ENCODE measurements at regions of chr3 and their contacts with region 1.

Region 1: GRCh38 chr3:38117748-38118420 is 19.0 kb downstream of the ACAA1 start:
- DNase-seq: peak; percentile 66 to 74 (median 70)
- H3K4me3 ChIP-seq: no peak overlapping the region
- H3K4me3 Mint-ChIP-seq: no peak overlapping the region
- H3K27ac ChIP-seq: no peak overlapping the region
- H3K27ac Mint-ChIP-seq: peak overlapping the region in 4 of 7 donors; percentile 25 to 86 (median 77)
- H3K4me1 ChIP-seq: no peaks in the 10 kb centered on the region
- H3K4me1 Mint-ChIP-seq: peaks cover 2 to 15% (median 6%) of the 10 kb centered on the region in 4 donors
- H3K27me3 ChIP-seq: no peaks in the 10 kb centered on the region
- H3K27me3 Mint-ChIP-seq: no peaks in the 10 kb centered on the region

Region 2: GRCh38 chr3:38131621-38132369 is 13.9 kb after region 1 on chr3:
- CTCF ChIA-PET with region 1: interaction called, 12 read pairs
- POLR2A ChIA-PET with region 1: interaction called, 12 read pairs
- intact Hi-C with region 1: no loop called
- DNase-seq: peak in 1 of 5 donors; percentile 12
- H3K4me3 ChIP-seq: no peak overlapping the region
- H3K4me3 Mint-ChIP-seq: no peak overlapping the region
- H3K27ac ChIP-seq: no peak overlapping the region
- H3K27ac Mint-ChIP-seq: peak overlapping the region; percentile 19 to 80 (median 48)
- H3K4me1 ChIP-seq: peaks cover 48% of the 10 kb centered on the region
- H3K4me1 Mint-ChIP-seq: peaks cover 26 to 55% (median 34%) of the 10 kb centered on the region in 4 donors
- H3K27me3 ChIP-seq: no peaks in the 10 kb centered on the region
- H3K27me3 Mint-ChIP-seq: no peaks in the 10 kb centered on the region

Region 3: DNA sequence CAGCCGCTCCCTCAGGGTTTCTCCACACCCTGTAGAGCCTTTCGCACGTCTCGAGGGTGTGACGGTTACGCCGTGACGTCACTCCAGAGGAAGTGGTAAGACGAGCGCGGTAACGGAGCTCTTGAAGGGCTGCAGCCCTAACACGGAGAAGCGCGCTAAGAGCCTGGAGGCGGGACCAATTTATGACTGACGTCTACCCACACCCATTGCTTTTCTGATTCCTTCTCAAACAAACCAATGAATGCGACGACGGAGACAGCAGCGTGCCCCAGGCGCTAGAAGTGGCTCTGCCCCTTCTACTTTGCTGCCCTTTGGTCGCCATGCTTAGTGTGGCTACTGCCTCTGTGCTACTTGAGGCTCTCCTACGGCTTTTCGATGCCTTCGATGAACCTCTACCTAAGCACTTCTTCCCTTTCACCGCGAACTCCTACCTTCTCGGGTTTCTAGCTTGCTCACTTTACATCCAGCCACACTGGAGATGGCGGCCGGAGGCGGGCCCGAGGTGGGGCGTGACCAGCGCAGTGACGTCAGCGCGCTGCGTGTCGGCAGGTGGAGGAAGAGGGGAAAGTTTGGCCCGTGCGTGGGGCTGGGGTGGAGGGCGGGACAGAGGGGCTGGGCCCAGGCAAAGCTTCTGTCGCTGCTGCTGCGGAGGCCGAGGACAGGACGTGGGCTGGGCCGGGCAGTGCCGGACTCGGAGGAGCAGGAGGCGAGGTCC is 47.2 kb after region 1 on chr3 and contains the start of gene OXSR1:
- CTCF ChIA-PET with region 1: interaction called, 8 read pairs
- POLR2A ChIA-PET with region 1: interaction called, 9 read pairs
- intact Hi-C with region 1: loop called (anchors 1 kb)
- DNase-seq: peak; percentile 97 to 99 (median 99)
- H3K4me3 ChIP-seq: peak within 1 kb of the TSS; percentile 66 to 72
- H3K4me3 Mint-ChIP-seq: peak within 1 kb of the TSS; percentile 88 to 98 (median 94)
- H3K27ac ChIP-seq: peak within 1 kb of the TSS; percentile 95
- H3K27ac Mint-ChIP-seq: peak within 1 kb of the TSS; percentile 99 to 100 (median 100)
- H3K4me1 ChIP-seq: peaks cover 40% of the 10 kb centered on the region
- H3K4me1 Mint-ChIP-seq: peaks cover 31 to 52% (median 42%) of the 10 kb centered on the region in 4 donors
- H3K27me3 ChIP-seq: no peaks in the 10 kb centered on the region
- H3K27me3 Mint-ChIP-seq: no peaks in the 10 kb centered on the region
- total RNA-seq, gene OXSR1: 39.6 to 43.9 TPM

Region 4: DNA sequence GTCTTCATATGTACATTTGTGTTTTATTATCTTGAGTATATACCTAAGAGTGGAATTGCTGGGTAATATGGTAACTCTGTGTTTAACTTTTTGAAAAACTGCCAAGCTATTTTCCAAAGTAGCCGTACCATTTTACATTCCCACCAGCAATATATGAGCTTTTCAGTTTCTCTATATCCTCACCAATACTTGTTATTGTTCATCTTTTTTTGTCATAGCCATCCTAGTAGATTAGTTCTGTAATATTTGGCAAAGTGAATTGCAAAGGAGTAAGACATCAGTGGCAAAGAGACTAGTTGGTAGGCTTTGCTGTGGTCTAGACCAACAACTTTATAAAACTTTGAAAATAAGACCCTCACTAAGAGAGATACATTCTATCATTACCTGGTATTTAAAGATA is 68.9 kb after region 1 on chr3:
- CTCF ChIA-PET with region 1: no interaction called
- POLR2A ChIA-PET with region 1: no interaction called
- intact Hi-C with region 1: no loop called
- DNase-seq: no peak
- H3K4me3 ChIP-seq: no peak overlapping the region
- H3K4me3 Mint-ChIP-seq: no peak overlapping the region
- H3K27ac ChIP-seq: no peak overlapping the region
- H3K27ac Mint-ChIP-seq: peak overlapping the region in 1 of 7 donors; percentile 19
- H3K4me1 ChIP-seq: no peaks in the 10 kb centered on the region
- H3K4me1 Mint-ChIP-seq: peaks cover 2 to 13% (median 12%) of the 10 kb centered on the region in 4 donors
- H3K27me3 ChIP-seq: no peaks in the 10 kb centered on the region
- H3K27me3 Mint-ChIP-seq: no peaks in the 10 kb centered on the region

Region 5: DNA sequence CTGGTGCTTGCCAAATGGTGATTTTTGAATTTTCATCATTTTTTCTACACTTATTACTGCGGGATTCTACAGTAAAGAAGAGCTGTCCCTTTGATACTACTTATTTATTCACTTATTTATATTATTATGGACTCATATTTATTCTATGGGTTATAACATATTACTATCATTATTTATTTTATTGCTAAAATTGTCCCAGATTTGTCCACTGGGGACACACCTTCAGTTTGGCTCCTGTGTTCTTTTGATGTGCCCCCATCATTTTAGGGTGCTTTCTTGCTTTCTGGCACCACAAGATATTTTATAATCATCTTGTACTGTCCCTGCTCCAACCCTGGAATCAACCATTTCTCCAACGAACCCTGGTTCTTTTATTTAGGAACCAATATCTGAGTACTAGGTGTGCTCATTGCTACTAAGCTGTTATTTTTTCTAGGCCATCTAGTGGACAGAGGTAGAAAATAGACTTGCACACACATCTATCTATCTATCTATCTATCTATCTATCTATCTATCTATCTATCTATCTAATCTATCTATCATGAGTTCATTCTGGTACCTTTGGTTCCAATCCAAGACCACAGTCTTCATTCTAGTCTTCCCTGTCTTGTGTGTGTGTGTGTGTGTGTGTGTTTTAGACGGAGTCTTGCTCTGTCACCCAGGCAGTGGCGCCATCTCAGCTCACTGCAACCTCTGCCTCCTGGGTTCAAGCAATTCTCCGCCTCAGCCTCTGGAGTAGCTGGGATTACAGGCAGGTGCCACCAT is 180.2 kb after region 1 on chr3:
- CTCF ChIA-PET with region 1: interaction called, 20 read pairs
- POLR2A ChIA-PET with region 1: no interaction called
- intact Hi-C with region 1: no loop called
- DNase-seq: peak in 2 of 5 donors; percentile 6 to 11
- H3K4me3 ChIP-seq: no peak overlapping the region
- H3K4me3 Mint-ChIP-seq: no peak overlapping the region
- H3K27ac ChIP-seq: no peak overlapping the region
- H3K27ac Mint-ChIP-seq: no peak overlapping the region
- H3K4me1 ChIP-seq: no peaks in the 10 kb centered on the region
- H3K4me1 Mint-ChIP-seq: peaks cover 0 to 1% (median 0%) of the 10 kb centered on the region in 4 donors
- H3K27me3 ChIP-seq: no peaks in the 10 kb centered on the region
- H3K27me3 Mint-ChIP-seq: peaks cover 4 to 14% of the 10 kb centered on the region in 2 donors

Region 6: GRCh38 chr3:38479431-38480092 is 361.7 kb after region 1 on chr3:
- CTCF ChIA-PET with region 1: interaction called, 29 read pairs
- POLR2A ChIA-PET with region 1: no interaction called
- intact Hi-C with region 1: loop called (anchors 1 kb)
- DNase-seq: peak in 4 of 5 donors; percentile 46 to 58 (median 48)
- H3K4me3 ChIP-seq: no peak overlapping the region
- H3K4me3 Mint-ChIP-seq: no peak overlapping the region
- H3K27ac ChIP-seq: no peak overlapping the region
- H3K27ac Mint-ChIP-seq: peak overlapping the region in 2 of 7 donors; percentile 3 to 9
- H3K4me1 ChIP-seq: no peaks in the 10 kb centered on the region
- H3K4me1 Mint-ChIP-seq: peaks cover 0 to 12% (median 3%) of the 10 kb centered on the region in 4 donors
- H3K27me3 ChIP-seq: no peaks in the 10 kb centered on the region
- H3K27me3 Mint-ChIP-seq: no peaks in the 10 kb centered on the region

Measured in CD4-positive, alpha-beta memory T cell (primary cell).